Naive thymus-derived CD8-positive, alpha-beta T cell (primary cell): ENCODE measurements at regions of chr12 and their contacts with region 1.

Region 1: DNA sequence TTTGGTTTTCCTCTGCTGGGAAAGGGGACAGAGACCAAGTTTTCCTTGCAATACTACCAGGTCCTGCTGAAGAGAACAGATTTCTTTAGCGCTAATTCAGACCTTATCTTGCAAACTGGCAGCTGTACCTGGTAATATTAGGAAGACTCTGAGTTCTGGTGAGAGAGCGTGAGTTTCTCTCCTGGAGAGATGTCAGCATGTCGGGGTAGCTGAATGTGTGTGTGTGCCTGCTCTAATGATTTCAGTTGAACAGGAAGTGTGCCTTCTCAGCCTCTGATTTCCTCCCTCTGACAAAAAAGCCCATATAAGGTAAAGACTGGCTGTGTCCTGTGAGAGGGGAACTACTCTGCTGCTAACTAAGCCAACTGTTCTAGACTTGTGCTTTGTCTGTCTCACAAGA is 10.3 kb upstream of the ERP27 start:
- DNase-seq: peak in 9 of 10 donors; percentile 44 to 85 (median 71)
- ATAC-seq: peak; percentile 74 to 83
- H3K4me3 Mint-ChIP-seq: peak overlapping the region; percentile 74 to 100 (median 91)
- H3K27ac Mint-ChIP-seq: peak overlapping the region; percentile 95 to 100 (median 98)
- H3K4me1 Mint-ChIP-seq: peaks cover 47 to 94% (median 90%) of the 10 kb centered on the region in 4 donors
- H3K27me3 Mint-ChIP-seq: no peaks in the 10 kb centered on the region

Region 2: GRCh38 chr12:14937689-14938088 is 11.0 kb before region 1 on chr12:
- POLR2A ChIA-PET with region 1: interaction called, 12 read pairs
- DNase-seq: peak in 1 of 10 donors; percentile 15
- ATAC-seq: peak; percentile 39 to 42
- H3K4me3 Mint-ChIP-seq: peak overlapping the region in 5 of 10 donors; percentile 14 to 65 (median 47)
- H3K27ac Mint-ChIP-seq: peak overlapping the region; percentile 89 to 96 (median 92)
- H3K4me1 Mint-ChIP-seq: peaks cover 28 to 81% (median 68%) of the 10 kb centered on the region in 4 donors
- H3K27me3 Mint-ChIP-seq: no peaks in the 10 kb centered on the region

Region 3: GRCh38 chr12:15122344-15122743 is 173.7 kb after region 1 on chr12:
- POLR2A ChIA-PET with region 1: no interaction called
- DNase-seq: no peak
- ATAC-seq: no peak
- H3K4me3 Mint-ChIP-seq: no peak overlapping the region
- H3K27ac Mint-ChIP-seq: no peak overlapping the region
- H3K4me1 Mint-ChIP-seq: no peaks in the 10 kb centered on the region
- H3K27me3 Mint-ChIP-seq: peaks cover 0 to 12% (median 5%) of the 10 kb centered on the region in 5 donors